ENCODE measurements at regions of chr5 and their contacts with region 1.

Region 1: DNA sequence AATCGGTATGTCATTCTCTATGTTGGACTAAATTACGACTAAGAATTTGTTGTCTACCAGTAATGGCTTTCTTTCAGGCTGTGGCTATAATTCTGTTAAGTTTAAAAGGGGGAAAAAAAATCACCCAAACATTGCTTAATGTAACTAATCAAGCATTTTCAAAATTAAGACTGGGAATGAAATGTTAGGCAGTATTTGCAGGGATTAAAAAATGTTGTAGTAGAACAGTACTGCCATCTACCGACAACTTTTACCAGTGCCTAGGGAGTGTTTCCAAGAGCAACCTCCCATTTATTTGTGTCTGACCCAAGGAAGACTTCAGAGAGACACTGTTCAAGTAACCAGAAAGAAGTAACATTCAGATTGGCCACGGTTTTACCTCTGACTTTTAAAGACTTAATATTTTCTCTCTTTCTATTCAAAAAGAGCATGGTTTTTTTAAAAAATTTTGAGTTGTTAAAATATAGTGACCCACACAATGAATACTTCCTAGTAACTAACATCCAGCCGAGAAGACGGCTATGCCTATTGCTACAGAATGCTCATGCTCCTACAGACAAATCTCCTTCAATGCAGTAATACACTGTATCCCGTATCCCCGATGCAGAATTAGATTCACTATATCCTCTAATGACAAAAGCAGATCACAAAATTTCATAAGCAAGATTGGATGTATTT is 92.4 kb downstream of the ARL15 start:
- DNase-seq: peak; percentile 4
- H3K4me3 ChIP-seq: no peak overlapping the region
- H3K27ac ChIP-seq: no peak overlapping the region
- H3K4me1 ChIP-seq: peaks cover 15 to 20% (median 17%) of the 10 kb centered on the region in 4 donors
- H3K27me3 ChIP-seq: no peaks in the 10 kb centered on the region
- CTCF ChIP-seq: peak; percentile 75 to 86 (median 79)
- EP300 ChIP-seq: no peak
- POLR2A ChIP-seq: no peak

Region 2: DNA sequence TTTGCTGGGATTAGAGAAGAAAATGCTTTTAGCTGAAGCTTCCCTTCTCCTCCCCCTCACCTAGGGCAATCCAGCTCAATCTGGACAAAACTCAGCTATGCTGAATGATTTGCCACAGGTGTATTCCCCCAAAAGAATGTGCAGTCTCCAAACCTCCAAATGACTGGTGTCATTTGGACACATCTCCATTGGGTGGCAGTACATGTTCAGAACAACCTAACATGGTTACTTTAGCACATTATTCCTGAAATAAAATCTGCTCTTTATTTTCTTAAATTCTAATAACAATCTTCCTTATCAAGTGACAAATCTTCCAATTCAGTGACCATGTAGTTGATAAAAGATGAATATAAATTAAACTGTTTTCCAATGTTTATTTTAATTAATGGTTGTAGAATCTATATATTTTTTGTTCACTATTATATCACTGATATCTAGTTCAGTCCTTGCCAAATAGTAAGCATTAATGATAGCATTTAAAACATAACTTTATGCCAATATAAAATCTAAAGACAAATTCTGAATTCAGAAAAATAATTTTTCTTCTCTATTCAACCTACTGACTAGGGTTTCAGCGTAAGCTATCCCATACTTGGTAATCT is 1047.1 kb before region 1 on chr5:
- intact Hi-C with region 1: loop called (anchors 5 kb)
- DNase-seq: no peak
- H3K4me3 ChIP-seq: no peak overlapping the region
- H3K27ac ChIP-seq: no peak overlapping the region
- H3K4me1 ChIP-seq: peaks cover 4 to 31% (median 28%) of the 10 kb centered on the region in 4 donors
- H3K27me3 ChIP-seq: no peaks in the 10 kb centered on the region
- CTCF ChIP-seq: peak; percentile 54 to 66 (median 59)
- EP300 ChIP-seq: no peak
- POLR2A ChIP-seq: no peak

Region 3: GRCh38 chr5:53481887-53482716 is 735.9 kb before region 1 on chr5:
- intact Hi-C with region 1: loop called (anchors 5 kb)
- DNase-seq: peak; percentile 96
- H3K4me3 ChIP-seq: peak overlapping the region; percentile 65 to 82 (median 72)
- H3K27ac ChIP-seq: peak overlapping the region; percentile 50 to 78 (median 68)
- H3K4me1 ChIP-seq: peaks cover 19 to 50% (median 42%) of the 10 kb centered on the region in 4 donors
- H3K27me3 ChIP-seq: peaks cover 0 to 6% (median 0%) of the 10 kb centered on the region in 4 donors
- CTCF ChIP-seq: peak in 2 of 3 experiments; percentile 22 to 62
- EP300 ChIP-seq: no peak
- POLR2A ChIP-seq: no peak

Region 4: DNA sequence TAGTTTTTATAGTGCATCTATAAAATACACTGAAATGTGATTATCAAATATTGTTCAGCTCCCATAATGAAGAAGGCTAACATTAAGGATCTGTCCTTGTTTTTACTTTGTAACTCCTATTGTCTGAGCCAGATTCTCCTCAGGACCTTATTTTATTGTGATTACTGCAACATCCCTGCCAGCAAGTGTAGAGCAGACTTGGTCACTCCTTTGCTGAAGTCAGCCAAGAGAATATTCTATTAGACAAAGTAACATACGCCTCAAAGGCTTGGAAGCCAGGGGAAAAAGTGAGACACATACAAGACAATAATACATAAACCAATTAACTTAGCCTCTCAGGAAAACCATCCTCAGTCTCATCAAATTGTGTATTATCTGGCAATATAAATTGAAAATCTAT is 177.2 kb before region 1 on chr5:
- intact Hi-C with region 1: no loop called
- DNase-seq: no peak
- H3K4me3 ChIP-seq: no peak overlapping the region
- H3K27ac ChIP-seq: no peak overlapping the region
- H3K4me1 ChIP-seq: peaks cover 0 to 8% (median 4%) of the 10 kb centered on the region in 4 donors
- H3K27me3 ChIP-seq: no peaks in the 10 kb centered on the region
- CTCF ChIP-seq: no peak
- EP300 ChIP-seq: no peak
- POLR2A ChIP-seq: no peak

Region 5: DNA sequence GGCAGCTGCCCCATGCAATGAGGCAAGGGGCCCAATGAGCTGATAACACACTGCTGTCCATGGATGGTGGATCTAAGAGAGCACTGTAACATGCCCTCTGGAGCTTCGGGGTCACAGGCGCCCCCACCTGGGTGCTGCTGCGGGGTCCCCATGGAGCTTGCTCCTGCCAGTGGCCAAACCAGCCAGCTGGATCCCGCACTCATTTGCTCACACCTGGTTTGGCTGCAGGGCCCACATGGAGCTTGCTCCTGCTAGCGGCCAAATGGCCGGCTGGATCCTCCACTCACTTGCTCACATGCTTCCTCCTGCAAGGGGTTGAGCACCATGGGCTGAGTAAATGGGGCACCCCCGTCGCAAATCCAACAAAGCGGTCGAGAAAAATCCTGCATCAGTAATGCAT is 160.7 kb after region 1 on chr5:
- intact Hi-C with region 1: no loop called
- DNase-seq: no peak
- H3K4me3 ChIP-seq: no peak overlapping the region
- H3K27ac ChIP-seq: no peak overlapping the region
- H3K4me1 ChIP-seq: no peaks in the 10 kb centered on the region
- H3K27me3 ChIP-seq: no peaks in the 10 kb centered on the region
- CTCF ChIP-seq: no peak
- EP300 ChIP-seq: no peak
- POLR2A ChIP-seq: no peak